ENCODE measurements at regions of chr3 and their contacts with region 1.

Region 1: DNA sequence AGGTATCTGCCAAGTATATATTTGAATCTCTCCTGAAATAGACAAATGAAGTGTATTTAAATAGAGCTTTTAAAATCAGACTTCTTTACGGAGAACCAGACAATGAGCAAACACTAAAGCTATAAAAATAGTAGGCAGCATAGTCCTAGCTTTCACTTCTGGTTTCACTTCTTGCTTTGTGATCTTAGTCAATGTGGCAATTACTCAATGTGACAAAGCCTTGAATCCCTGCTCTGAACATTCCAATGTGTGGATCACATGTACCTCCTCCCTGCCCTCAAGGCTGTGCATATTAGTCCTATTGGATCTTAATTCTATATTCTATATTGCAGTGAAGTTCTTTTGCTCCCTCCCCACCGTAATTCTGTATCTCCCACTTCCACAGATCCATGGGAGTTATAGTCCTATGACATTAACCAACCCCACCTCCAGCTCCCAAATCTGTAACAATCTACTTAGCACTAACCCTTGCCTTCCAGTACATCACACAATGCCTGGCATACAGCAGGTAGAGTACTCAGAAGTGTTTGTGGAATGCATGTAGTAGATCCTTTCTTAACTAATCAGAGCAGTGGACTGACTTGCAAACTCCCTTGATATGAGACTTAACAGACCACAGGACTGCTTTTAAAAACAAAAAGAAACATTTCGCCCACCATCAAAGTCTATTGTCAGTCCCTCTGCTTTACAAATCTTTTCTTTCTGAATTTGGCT is 24.3 kb upstream of the CP start:
- DNase-seq: peak; percentile 69
- ATAC-seq: peak; percentile 67
- H3K4me3 ChIP-seq: peak overlapping the region in 3 of 5 experiments; percentile 26
- H3K4me3 Mint-ChIP-seq: peak overlapping the region; percentile 57
- H3K27ac ChIP-seq: peak overlapping the region; percentile 46 to 87
- H3K27ac Mint-ChIP-seq: peak overlapping the region; percentile 57
- H3K4me1 ChIP-seq: peaks cover 55 to 56% of the 10 kb centered on the region in 2 donors
- H3K4me1 Mint-ChIP-seq: peaks cover 61% of the 10 kb centered on the region
- H3K27me3 ChIP-seq: no peaks in the 10 kb centered on the region
- H3K27me3 Mint-ChIP-seq: no peaks in the 10 kb centered on the region
- CTCF ChIP-seq: no peak

Region 2: GRCh38 chr3:149145974-149146373 is 99.9 kb before region 1 on chr3:
- CTCF ChIA-PET with region 1: no interaction called
- POLR2A ChIA-PET with region 1: no interaction called
- intact Hi-C with region 1: loop called (anchors 1 kb)
- DNase-seq: peak; percentile 88
- ATAC-seq: peak; percentile 93
- H3K4me3 ChIP-seq: peak overlapping the region in 4 of 5 experiments; percentile 6 to 42 (median 34)
- H3K4me3 Mint-ChIP-seq: no peak overlapping the region
- H3K27ac ChIP-seq: peak overlapping the region; percentile 84
- H3K27ac Mint-ChIP-seq: no peak overlapping the region
- H3K4me1 ChIP-seq: peaks cover 54 to 65% of the 10 kb centered on the region in 2 donors
- H3K4me1 Mint-ChIP-seq: peaks cover 45% of the 10 kb centered on the region
- H3K27me3 ChIP-seq: no peaks in the 10 kb centered on the region
- H3K27me3 Mint-ChIP-seq: no peaks in the 10 kb centered on the region
- CTCF ChIP-seq: no peak

Region 3: DNA sequence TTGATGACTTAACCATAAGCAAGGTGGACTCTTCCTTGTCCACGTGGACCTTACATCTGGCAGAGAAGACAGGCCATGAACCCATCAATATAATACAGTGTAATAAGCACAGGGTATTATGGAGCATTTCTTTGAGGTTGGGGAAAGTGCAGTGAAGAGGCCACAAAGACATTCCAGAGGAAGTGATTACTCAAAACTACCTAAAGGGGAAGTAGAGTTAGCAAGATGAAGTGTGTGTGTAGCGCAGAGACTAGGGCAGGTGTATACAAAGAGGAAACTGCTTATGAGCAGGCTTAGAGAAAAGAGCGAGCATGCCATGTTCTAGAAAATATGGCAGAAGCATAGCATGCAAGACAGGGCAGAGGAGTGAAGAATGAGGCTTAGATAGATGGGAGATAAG is 42.1 kb before region 1 on chr3:
- CTCF ChIA-PET with region 1: interaction called, 3 read pairs
- POLR2A ChIA-PET with region 1: no interaction called
- intact Hi-C with region 1: loop called (anchors 2 kb)
- DNase-seq: peak; percentile 75
- ATAC-seq: peak; percentile 94
- H3K4me3 ChIP-seq: peak overlapping the region in 1 of 5 experiments; percentile 4
- H3K4me3 Mint-ChIP-seq: peak overlapping the region; percentile 3
- H3K27ac ChIP-seq: peak overlapping the region; percentile 9 to 25
- H3K27ac Mint-ChIP-seq: peak overlapping the region; percentile 46
- H3K4me1 ChIP-seq: peaks cover 16 to 17% of the 10 kb centered on the region in 2 donors
- H3K4me1 Mint-ChIP-seq: peaks cover 21% of the 10 kb centered on the region
- H3K27me3 ChIP-seq: no peaks in the 10 kb centered on the region
- H3K27me3 Mint-ChIP-seq: no peaks in the 10 kb centered on the region
- CTCF ChIP-seq: no peak

Region 4: GRCh38 chr3:149267565-149267964 is 21.7 kb after region 1 on chr3:
- CTCF ChIA-PET with region 1: interaction called, 10 read pairs
- POLR2A ChIA-PET with region 1: interaction called, 4 read pairs
- intact Hi-C with region 1: loop called (anchors 2 kb)
- DNase-seq: peak; percentile 45
- ATAC-seq: peak; percentile 72
- H3K4me3 ChIP-seq: no peak overlapping the region
- H3K4me3 Mint-ChIP-seq: peak overlapping the region; percentile 40
- H3K27ac ChIP-seq: no peak overlapping the region
- H3K27ac Mint-ChIP-seq: no peak overlapping the region
- H3K4me1 ChIP-seq: peaks cover 14 to 17% of the 10 kb centered on the region in 2 donors
- H3K4me1 Mint-ChIP-seq: peaks cover 29% of the 10 kb centered on the region
- H3K27me3 ChIP-seq: no peaks in the 10 kb centered on the region
- H3K27me3 Mint-ChIP-seq: no peaks in the 10 kb centered on the region
- CTCF ChIP-seq: no peak

Region 5: DNA sequence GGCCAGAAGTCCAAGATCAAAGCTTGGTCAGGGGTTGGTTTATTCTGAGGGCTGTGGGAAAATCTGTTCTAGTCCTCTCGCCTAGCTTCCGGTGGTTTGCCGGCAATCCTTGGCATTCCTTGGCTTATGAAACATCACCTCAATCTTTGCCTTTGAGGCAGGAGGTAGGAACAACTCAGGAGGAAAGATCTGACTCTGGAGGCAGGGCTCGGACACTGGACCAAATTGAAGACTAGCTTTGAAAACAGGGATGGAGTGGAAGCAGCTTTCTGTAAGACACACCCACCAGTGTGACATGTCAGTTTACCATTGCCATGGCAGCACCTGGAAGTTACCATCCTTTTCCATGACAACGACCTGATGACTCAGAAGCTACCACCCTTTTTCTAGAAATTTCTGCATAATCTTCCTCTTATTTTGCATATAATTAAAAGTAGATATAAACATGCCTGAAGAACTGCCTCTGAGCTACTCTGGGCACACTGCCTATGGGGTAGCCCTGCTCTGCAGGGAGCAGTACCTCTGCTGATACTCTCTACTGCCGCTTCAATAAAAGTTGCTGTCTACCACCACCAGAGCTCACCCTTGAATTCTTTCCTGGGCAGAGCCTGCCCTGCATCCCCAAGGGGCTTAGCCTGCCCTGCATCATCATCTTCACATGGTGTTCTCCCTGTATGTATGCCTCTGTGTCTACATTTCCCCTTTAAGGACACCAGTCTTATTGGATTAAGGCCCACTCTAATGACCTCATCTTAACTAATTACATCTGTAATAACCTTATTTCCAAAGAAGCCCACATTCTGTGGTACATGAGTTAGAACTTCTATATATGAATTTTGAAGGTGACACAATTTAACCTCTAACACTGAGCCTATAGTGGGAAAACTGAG is 190.3 kb after region 1 on chr3:
- CTCF ChIA-PET with region 1: no interaction called
- POLR2A ChIA-PET with region 1: no interaction called
- intact Hi-C with region 1: no loop called
- DNase-seq: no peak
- ATAC-seq: no peak
- H3K4me3 ChIP-seq: no peak overlapping the region
- H3K4me3 Mint-ChIP-seq: no peak overlapping the region
- H3K27ac ChIP-seq: no peak overlapping the region
- H3K27ac Mint-ChIP-seq: no peak overlapping the region
- H3K4me1 ChIP-seq: no peaks in the 10 kb centered on the region
- H3K4me1 Mint-ChIP-seq: no peaks in the 10 kb centered on the region
- H3K27me3 ChIP-seq: peaks cover 0 to 5% (median 1%) of the 10 kb centered on the region in 4 experiments
- H3K27me3 Mint-ChIP-seq: peaks cover 14% of the 10 kb centered on the region
- CTCF ChIP-seq: no peak

Region 6: GRCh38 chr3:149969940-149970715 is 724.2 kb after region 1 on chr3:
- CTCF ChIA-PET with region 1: no interaction called
- POLR2A ChIA-PET with region 1: no interaction called
- intact Hi-C with region 1: no loop called
- DNase-seq: peak; percentile 87
- ATAC-seq: peak; percentile 71
- H3K4me3 ChIP-seq: peak overlapping the region; percentile 35 to 78 (median 67)
- H3K4me3 Mint-ChIP-seq: peak overlapping the region; percentile 96
- H3K27ac ChIP-seq: no peak overlapping the region
- H3K27ac Mint-ChIP-seq: peak overlapping the region; percentile 83
- H3K4me1 ChIP-seq: peaks cover 14% of the 10 kb centered on the region in 2 donors
- H3K4me1 Mint-ChIP-seq: peaks cover 22% of the 10 kb centered on the region
- H3K27me3 ChIP-seq: peaks cover 0 to 15% (median 14%) of the 10 kb centered on the region in 4 experiments
- H3K27me3 Mint-ChIP-seq: peaks cover 27% of the 10 kb centered on the region
- CTCF ChIP-seq: no peak

Measured in B cell (primary cell).